K562 (cell line): ENCODE measurements at regions of chr3 and their contacts with region 1.

Region 1: DNA sequence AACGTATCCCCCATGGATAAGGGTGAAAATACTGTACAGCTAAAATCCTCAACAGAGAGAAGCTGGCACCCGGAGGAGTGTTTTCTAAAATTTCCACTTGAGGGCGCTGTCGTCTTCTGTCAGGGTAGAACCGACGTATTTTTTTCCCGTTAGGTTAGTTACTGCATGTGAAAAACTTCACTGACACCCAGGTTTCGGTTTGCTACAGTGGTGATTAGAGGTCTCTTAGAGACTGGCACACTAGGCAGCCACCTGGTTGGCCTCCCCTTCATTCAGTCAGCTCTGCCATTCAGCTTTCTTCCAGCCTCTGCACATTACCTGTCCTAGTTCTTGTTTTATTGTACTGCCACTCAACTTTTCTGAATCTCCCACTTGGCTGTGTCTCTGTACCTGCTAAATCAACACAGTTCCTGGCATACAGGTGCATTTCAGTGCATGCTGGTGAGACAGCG is 18.4 kb downstream of the CCK start:
- DNase-seq: peak; percentile 66 to 76 (median 72)
- ATAC-seq: peak; percentile 94
- H3K4me3 ChIP-seq: no peak overlapping the region
- H3K27ac ChIP-seq: no peak overlapping the region
- H3K4me1 ChIP-seq: no peaks in the 10 kb centered on the region
- H3K27me3 ChIP-seq: peaks cover 3 to 10% of the 10 kb centered on the region in 2 experiments; a peak in 1 of 5 replicates
- CTCF ChIP-seq: peak; percentile 82 to 95 (median 87)
- EP300 ChIP-seq: no peak
- POLR2A ChIP-seq: no peak
- RAD21 ChIP-seq: peak; percentile 87 to 93

Region 2: GRCh38 chr3:42443819-42444436 is 196.3 kb after region 1 on chr3:
- CTCF ChIA-PET with region 1: interaction called, 18 read pairs
- POLR2A ChIA-PET with region 1: no interaction called
- in situ Hi-C with region 1: loop called (anchors 5 kb)
- intact Hi-C with region 1: loop called (anchors 1 kb)
- DNase-seq: peak; percentile 84 to 90 (median 88)
- ATAC-seq: peak; percentile 99
- H3K4me3 ChIP-seq: no peak overlapping the region
- H3K27ac ChIP-seq: no peak overlapping the region
- H3K4me1 ChIP-seq: no peaks in the 10 kb centered on the region
- H3K27me3 ChIP-seq: peaks cover 8 to 24% of the 10 kb centered on the region in 2 experiments
- CTCF ChIP-seq: peak; percentile 94 to 98 (median 97)
- EP300 ChIP-seq: no peak
- POLR2A ChIP-seq: no peak
- RAD21 ChIP-seq: peak; percentile 94 to 97

Region 3: GRCh38 chr3:42539869-42540714 is 292.5 kb after region 1 on chr3:
- CTCF ChIA-PET with region 1: interaction called, 7 read pairs
- POLR2A ChIA-PET with region 1: no interaction called
- in situ Hi-C with region 1: loop called (anchors 5 kb)
- intact Hi-C with region 1: loop called (anchors 1 kb)
- DNase-seq: peak; percentile 80 to 94 (median 89)
- ATAC-seq: peak; percentile 85
- H3K4me3 ChIP-seq: no peak overlapping the region
- H3K27ac ChIP-seq: no peak overlapping the region
- H3K4me1 ChIP-seq: peaks cover 0 to 6% of the 10 kb centered on the region in 2 experiments; a peak in 2 of 5 replicates
- H3K27me3 ChIP-seq: peaks cover 0 to 12% of the 10 kb centered on the region in 2 experiments; a peak in 2 of 5 replicates
- CTCF ChIP-seq: peak; percentile 81 to 91 (median 85)
- EP300 ChIP-seq: no peak
- POLR2A ChIP-seq: no peak
- RAD21 ChIP-seq: peak; percentile 42 to 58; a peak in 3 of 4 replicates

Region 4: GRCh38 chr3:42600111-42600988 is 352.7 kb after region 1 on chr3 and contains the start of gene NKTR:
- CTCF ChIA-PET with region 1: no interaction called
- POLR2A ChIA-PET with region 1: no interaction called
- in situ Hi-C with region 1: no loop called
- intact Hi-C with region 1: no loop called
- DNase-seq: peak; percentile 96 to 100 (median 98)
- ATAC-seq: peak; percentile 85
- H3K4me3 ChIP-seq: peak within 1 kb of the TSS; percentile 85
- H3K27ac ChIP-seq: peak within 1 kb of the TSS; percentile 95
- H3K4me1 ChIP-seq: peaks cover 12 to 13% of the 10 kb centered on the region in 2 experiments; a peak in 4 of 5 replicates
- H3K27me3 ChIP-seq: no peaks in the 10 kb centered on the region
- CTCF ChIP-seq: peak in 2 of 3 experiments; percentile 26 to 45; a peak in 2 of 6 replicates
- EP300 ChIP-seq: peak; percentile 73
- POLR2A ChIP-seq: peak; percentile 97
- RAD21 ChIP-seq: peak in 1 of 2 experiments; percentile 5; a peak in 1 of 4 replicates
- polyA plus RNA-seq, gene NKTR: 19.7 to 30.2 TPM